ENCODE measurements at regions of chr17 and their contacts with region 1.

Region 1: GRCh38 chr17:81101614-81102306 is 63.5 kb upstream of the PVALEF start:
- DNase-seq: peak; percentile 94
- ATAC-seq: peak; percentile 97
- H3K4me3 Mint-ChIP-seq: no peak overlapping the region
- H3K27ac Mint-ChIP-seq: no peak overlapping the region
- H3K4me1 Mint-ChIP-seq: peaks cover 14% of the 10 kb centered on the region
- H3K27me3 Mint-ChIP-seq: no peaks in the 10 kb centered on the region

Region 2: GRCh38 chr17:80991645-80992076 is 110.1 kb before region 1 on chr17 and contains the start of gene CHMP6:
- CTCF ChIA-PET with region 1: interaction called, 3 read pairs
- POLR2A ChIA-PET with region 1: no interaction called
- intact Hi-C with region 1: loop called in 1 of 2 experiments (anchors 1 kb)
- DNase-seq: peak; percentile 83
- ATAC-seq: peak; percentile 49
- H3K4me3 Mint-ChIP-seq: peak within 1 kb of the TSS; percentile 69
- H3K27ac Mint-ChIP-seq: peak within 1 kb of the TSS; percentile 74
- H3K4me1 Mint-ChIP-seq: peaks cover 21% of the 10 kb centered on the region
- H3K27me3 Mint-ChIP-seq: peaks cover 3% of the 10 kb centered on the region
- total RNA-seq, gene CHMP6: 15.9 to 19.4 TPM

Region 3: DNA sequence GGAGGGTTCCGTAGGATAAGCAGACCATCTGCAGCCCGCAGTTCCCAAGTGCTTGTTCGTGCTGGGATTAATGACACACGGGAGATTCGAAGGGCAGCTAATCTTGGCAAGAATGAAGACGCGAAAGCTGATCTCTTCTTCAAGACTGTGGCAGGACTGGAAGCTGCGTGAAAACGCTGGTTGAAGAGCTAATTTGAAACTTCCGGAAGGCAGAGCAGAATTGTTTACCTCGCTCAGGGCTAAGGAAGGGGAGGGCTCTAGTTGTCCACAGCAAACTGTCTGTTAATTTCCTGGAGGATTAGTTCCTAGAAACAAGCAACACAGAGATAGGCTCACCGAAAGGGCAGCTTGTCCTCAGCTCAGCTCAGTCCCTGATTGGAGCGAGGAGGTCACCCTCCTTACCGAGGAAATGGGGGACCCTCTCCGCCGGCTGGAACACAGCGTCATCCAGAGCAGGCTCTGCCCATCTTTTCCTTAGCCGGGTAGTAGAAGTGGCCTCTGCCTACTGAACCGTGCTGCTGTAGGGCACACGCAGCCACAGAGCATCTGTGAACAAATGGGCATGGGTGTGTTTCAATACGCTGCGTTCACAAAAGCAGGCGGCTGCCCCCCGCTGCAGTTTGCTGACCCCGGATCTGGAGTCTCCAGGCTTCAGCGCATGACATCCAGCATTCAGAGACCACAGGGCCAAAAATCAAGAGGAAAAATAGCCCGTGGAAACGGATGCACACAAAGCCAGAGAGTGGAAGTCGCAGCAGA is 83.5 kb before region 1 on chr17:
- CTCF ChIA-PET with region 1: interaction called, 17 read pairs
- POLR2A ChIA-PET with region 1: no interaction called
- intact Hi-C with region 1: loop called (anchors 1 kb)
- DNase-seq: peak; percentile 54
- ATAC-seq: peak; percentile 84
- H3K4me3 Mint-ChIP-seq: peak overlapping the region; percentile 64
- H3K27ac Mint-ChIP-seq: peak overlapping the region; percentile 87
- H3K4me1 Mint-ChIP-seq: peaks cover 17% of the 10 kb centered on the region
- H3K27me3 Mint-ChIP-seq: no peaks in the 10 kb centered on the region

Region 4: DNA sequence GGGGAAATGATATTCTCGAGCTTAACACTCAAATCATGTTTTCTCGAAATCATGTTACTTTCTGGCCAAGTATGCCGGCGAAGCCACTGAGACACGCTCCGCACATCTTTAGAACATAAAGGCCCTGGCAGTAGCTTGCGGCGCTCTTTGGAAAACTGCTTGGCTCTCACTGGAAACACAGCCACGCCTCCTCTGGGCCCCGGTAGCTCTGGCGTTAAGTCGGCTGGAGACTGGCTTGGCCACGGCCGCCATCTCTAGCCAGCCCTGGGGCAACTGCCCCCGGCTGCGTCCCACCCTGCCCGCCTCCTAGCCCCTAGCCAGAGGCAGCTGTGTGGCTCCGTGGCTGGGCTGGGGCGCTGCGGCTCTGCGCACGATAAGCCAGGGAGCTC is 76.0 kb before region 1 on chr17:
- CTCF ChIA-PET with region 1: interaction called, 17 read pairs
- POLR2A ChIA-PET with region 1: no interaction called
- intact Hi-C with region 1: loop called (anchors 1 kb)
- DNase-seq: no peak
- ATAC-seq: no peak
- H3K4me3 Mint-ChIP-seq: no peak overlapping the region
- H3K27ac Mint-ChIP-seq: no peak overlapping the region
- H3K4me1 Mint-ChIP-seq: peaks cover 5% of the 10 kb centered on the region
- H3K27me3 Mint-ChIP-seq: peaks cover 11% of the 10 kb centered on the region

Region 5: GRCh38 chr17:81200695-81201580 is 99.2 kb after region 1 on chr17:
- CTCF ChIA-PET with region 1: no interaction called
- POLR2A ChIA-PET with region 1: no interaction called
- intact Hi-C with region 1: no loop called
- DNase-seq: peak; percentile 36
- ATAC-seq: peak; percentile 71
- H3K4me3 Mint-ChIP-seq: no peak overlapping the region
- H3K27ac Mint-ChIP-seq: no peak overlapping the region
- H3K4me1 Mint-ChIP-seq: no peaks in the 10 kb centered on the region
- H3K27me3 Mint-ChIP-seq: no peaks in the 10 kb centered on the region